PC-9 (cell line): ENCODE measurements at regions of chr16 and their contacts with region 1.

Region 1: DNA sequence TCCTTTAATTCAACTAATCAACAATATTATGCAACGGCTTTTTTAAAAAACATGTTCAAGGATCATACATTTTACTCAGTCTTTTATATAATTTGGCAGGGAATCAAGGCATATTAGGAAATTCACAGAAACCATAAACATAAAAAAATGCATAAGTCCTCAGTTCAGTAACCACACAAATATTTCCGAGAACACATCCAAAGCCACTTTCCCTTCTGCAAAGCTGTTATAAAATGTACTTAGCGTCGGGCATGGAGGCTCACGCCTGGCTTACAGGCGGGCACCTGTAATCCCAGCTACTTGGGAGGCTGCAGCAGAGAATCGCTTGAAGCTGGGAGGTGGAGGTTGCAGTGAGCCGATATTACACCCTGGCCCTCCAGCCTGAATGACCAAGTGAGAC is 9.7 kb upstream of the ZC3H7A start:
- DNase-seq: no peak
- H3K4me3 ChIP-seq: no peak overlapping the region
- H3K27ac ChIP-seq: no peak overlapping the region
- H3K4me1 ChIP-seq: peaks cover 7% of the 10 kb centered on the region; the same call in 1 of the 2 replicates
- H3K27me3 ChIP-seq: no peaks in the 10 kb centered on the region
- CTCF ChIP-seq: no peak

Region 2: GRCh38 chr16:10949370-10949970 is 857.3 kb before region 1 on chr16:
- CTCF ChIA-PET with region 1: no interaction called
- POLR2A ChIA-PET with region 1: no interaction called
- intact Hi-C with region 1: loop called (anchors 5 kb)
- DNase-seq: peak; percentile 42 to 79
- H3K4me3 ChIP-seq: no peak overlapping the region
- H3K27ac ChIP-seq: peak overlapping the region; percentile 41
- H3K4me1 ChIP-seq: peaks cover 45% of the 10 kb centered on the region
- H3K27me3 ChIP-seq: no peaks in the 10 kb centered on the region
- CTCF ChIP-seq: no peak; the same call in 1 of the 2 replicates

Region 3: DNA sequence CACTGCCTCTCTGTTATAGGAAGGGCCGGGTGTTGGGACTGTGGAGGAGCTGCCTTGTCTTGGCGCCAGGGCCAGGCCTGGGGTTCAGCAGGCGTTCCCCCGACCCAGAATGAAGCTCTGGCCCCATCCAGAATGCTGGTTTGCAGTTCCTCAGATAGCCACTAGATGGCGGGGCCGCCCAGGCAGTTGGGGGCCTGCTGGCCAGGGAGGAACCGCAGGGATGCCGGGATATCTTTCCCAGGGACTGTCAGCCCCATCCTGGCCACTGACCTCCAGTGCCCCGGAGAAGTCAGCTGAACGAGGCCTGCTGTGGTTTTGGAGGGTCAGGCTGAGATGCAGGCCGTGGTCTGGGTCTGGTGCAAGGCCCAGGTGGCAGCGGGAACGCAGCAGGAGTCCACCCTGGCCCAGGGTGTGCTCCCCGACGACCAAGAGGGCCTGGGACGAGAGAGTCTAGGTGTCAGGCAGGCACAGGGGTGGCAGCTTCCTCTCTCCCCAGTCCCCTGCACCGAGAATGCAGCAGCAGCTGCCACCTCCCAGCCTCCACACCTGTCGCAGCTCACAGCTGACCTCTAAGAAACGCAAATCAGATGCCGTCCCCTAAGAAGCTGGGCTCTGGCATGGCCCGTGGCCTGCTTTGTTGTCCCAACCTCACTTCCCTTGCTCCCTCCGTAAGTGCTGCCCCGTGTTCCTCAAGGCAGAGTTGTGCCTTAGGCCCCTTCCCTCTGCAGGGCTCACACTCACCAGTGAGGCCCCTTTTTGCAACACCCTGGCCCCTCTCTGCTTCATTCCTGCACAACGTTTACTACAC is 410.3 kb before region 1 on chr16:
- CTCF ChIA-PET with region 1: no interaction called
- POLR2A ChIA-PET with region 1: no interaction called
- intact Hi-C with region 1: loop called (anchors 5 kb)
- DNase-seq: peak in 1 of 2 experiments; percentile 82
- H3K4me3 ChIP-seq: no peak overlapping the region
- H3K27ac ChIP-seq: no peak overlapping the region
- H3K4me1 ChIP-seq: 0 out of 2 replicates have a peak, but pooled peaks cover under 1% of the 10 kb centered on the region
- H3K27me3 ChIP-seq: no peaks in the 10 kb centered on the region
- CTCF ChIP-seq: peak; percentile 99

Region 4: DNA sequence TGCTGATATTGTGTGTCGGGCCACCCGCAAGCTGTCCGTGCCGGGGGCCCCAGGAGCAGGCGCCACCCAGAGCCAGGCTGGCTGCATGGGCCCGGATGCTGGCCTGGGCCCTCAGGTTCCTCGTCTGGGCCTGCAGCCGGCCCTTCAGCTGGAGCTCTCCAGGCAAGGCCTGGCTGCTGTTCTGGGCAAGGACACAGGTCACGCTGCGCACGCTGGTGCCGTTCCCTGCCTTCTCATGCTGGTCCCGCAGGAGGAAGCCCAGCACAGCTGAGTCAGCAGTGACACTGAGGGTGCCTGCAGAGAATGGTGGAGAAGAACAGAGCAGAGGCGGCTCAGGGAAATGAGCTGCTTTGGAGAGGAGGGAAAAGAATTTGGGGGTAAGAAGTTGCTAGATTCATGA is 381.6 kb before region 1 on chr16:
- CTCF ChIA-PET with region 1: no interaction called
- POLR2A ChIA-PET with region 1: interaction called, 12 read pairs
- intact Hi-C with region 1: no loop called
- DNase-seq: no peak
- H3K4me3 ChIP-seq: no peak overlapping the region
- H3K27ac ChIP-seq: no peak overlapping the region
- H3K4me1 ChIP-seq: no peaks in the 10 kb centered on the region
- H3K27me3 ChIP-seq: no peaks in the 10 kb centered on the region
- CTCF ChIP-seq: no peak

Region 5: GRCh38 chr16:11572301-11572995 is 234.3 kb before region 1 on chr16:
- CTCF ChIA-PET with region 1: no interaction called
- POLR2A ChIA-PET with region 1: no interaction called
- intact Hi-C with region 1: no loop called
- DNase-seq: no peak
- H3K4me3 ChIP-seq: no peak overlapping the region
- H3K27ac ChIP-seq: no peak overlapping the region
- H3K4me1 ChIP-seq: 0 out of 2 replicates have a peak, but pooled peaks cover 9% of the 10 kb centered on the region
- H3K27me3 ChIP-seq: no peaks in the 10 kb centered on the region
- CTCF ChIP-seq: no peak

Region 6: GRCh38 chr16:11613381-11614303 is 193.1 kb before region 1 on chr16:
- CTCF ChIA-PET with region 1: no interaction called
- POLR2A ChIA-PET with region 1: interaction called, 11 read pairs
- intact Hi-C with region 1: no loop called
- DNase-seq: peak; percentile 54 to 70
- H3K4me3 ChIP-seq: no peak overlapping the region
- H3K27ac ChIP-seq: peak overlapping the region; percentile 94
- H3K4me1 ChIP-seq: peaks cover 84% of the 10 kb centered on the region
- H3K27me3 ChIP-seq: no peaks in the 10 kb centered on the region
- CTCF ChIP-seq: no peak

Region 7: DNA sequence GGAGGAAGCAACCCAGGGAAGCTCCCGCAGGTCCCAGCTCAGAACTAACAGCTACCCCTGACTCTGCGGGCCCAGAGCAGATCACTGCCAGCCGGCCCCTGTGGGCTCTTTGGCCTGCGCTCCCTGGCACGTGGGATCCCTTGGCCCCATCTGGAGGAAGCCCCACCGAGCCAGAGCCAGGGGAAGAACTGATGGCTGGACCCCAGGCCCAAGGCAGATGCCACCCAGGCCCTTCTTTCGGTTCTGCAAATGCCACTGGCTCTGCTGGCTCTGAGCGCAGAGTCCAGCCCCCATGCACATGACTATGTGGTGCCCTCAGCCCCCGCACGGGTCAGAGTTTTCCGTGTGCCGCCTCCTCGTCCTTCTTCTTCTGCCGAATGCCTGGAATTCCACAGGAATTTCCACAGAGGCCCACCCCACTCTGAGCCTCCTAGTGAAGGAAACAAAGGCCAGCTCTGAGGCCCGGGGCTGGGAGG is 174.2 kb before region 1 on chr16:
- CTCF ChIA-PET with region 1: no interaction called
- POLR2A ChIA-PET with region 1: no interaction called
- intact Hi-C with region 1: no loop called
- DNase-seq: no peak
- H3K4me3 ChIP-seq: no peak overlapping the region
- H3K27ac ChIP-seq: no peak overlapping the region
- H3K4me1 ChIP-seq: peaks cover 50% of the 10 kb centered on the region
- H3K27me3 ChIP-seq: no peaks in the 10 kb centered on the region
- CTCF ChIP-seq: no peak

Region 8: DNA sequence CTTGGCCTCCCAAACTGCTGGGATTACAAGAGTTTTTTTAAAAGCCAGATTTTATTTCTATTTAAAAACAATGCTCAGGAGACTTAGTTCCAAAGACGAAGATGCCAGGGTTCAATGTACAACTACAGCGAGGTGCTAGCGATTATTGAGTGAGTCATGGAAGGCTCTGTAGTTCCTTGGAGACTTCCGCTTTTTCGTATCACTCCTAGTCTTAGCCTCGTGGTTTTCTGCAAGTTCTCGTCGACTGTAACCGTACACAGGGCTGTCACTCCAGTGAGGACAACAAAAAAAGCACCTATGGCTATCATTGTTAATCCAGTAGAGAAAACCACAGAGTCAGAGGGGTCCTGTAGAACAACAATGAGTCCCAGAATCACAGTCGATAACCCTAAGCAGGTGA is 13.1 kb after region 1 on chr16:
- CTCF ChIA-PET with region 1: interaction called, 11 read pairs
- POLR2A ChIA-PET with region 1: no interaction called
- intact Hi-C with region 1: no loop called
- DNase-seq: no peak
- H3K4me3 ChIP-seq: no peak overlapping the region
- H3K27ac ChIP-seq: no peak overlapping the region
- H3K4me1 ChIP-seq: peaks cover 12% of the 10 kb centered on the region
- H3K27me3 ChIP-seq: no peaks in the 10 kb centered on the region
- CTCF ChIP-seq: no peak

Region 9: DNA sequence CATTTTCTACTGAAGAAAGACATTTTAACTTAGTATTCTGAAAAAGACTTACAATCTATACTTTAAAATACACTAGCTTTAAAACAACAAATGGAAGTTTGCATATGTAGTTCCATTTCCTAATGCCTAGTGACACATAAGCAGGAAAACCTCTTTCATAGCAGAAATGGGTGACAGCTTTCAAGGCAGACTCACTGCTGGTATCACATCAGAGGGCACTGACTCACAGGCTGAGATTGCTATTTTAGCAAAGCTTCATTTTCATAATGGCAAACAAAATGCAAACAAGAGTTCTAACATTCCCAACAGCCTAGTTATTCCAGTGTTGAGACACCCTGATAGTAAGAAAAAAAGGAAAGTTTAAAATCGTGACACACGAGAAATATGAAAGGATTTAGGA is 90.1 kb after region 1 on chr16:
- CTCF ChIA-PET with region 1: no interaction called
- POLR2A ChIA-PET with region 1: no interaction called
- intact Hi-C with region 1: no loop called
- DNase-seq: peak in 1 of 2 experiments; percentile 46
- H3K4me3 ChIP-seq: no peak overlapping the region
- H3K27ac ChIP-seq: no peak overlapping the region
- H3K4me1 ChIP-seq: no peaks in the 10 kb centered on the region
- H3K27me3 ChIP-seq: no peaks in the 10 kb centered on the region
- CTCF ChIP-seq: no peak